Common myeloid progenitor, CD34-positive (primary cell): ENCODE measurements at regions of chr7 and their contacts with region 1.

Region 1: DNA sequence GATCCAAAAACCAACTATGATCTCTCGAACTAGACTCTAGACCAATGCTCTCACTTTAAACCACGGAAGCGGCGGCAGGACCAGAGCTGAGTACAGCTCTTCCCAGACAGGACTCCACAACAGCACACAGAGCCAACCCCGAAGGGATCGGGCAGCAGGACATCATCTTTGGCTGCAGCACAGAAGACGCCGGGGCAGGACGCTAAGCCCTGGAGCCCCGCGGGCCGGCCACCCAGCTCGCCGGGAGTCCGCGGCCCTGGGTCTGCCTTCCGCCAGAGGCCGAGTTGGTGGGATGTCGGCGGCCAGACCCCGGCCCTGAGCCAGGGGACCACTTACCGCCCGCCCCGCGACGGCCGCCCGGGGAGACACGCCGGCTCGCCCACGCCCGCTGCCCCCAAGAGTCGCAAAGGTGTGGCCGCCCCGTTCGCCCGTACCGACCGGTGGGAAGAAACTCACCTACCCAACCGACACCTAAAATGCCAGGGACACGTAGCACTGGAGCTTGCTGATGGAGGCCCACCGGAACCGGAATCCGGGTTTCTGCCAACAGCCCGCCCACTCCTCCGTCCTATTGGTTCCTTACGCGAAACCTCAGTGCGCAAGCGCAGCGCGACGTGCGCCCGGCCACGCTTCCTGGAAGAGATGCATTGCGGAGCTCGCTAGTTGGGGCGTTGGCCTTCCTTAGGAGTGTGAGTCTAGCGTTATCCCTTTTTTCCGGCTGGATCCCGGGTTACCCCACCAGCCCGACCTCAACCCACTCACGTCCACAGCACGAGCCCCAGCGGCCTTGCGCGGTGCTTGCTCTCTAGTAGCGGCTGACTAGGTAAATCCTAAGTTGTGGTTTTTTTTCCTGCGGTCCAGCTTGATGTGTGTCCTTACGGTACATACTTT is at the start of gene SEC61G:
- DNase-seq: peak; percentile 96 to 97 (median 97)
- H3K4me3 ChIP-seq: peak within 1 kb of the TSS; percentile 84 to 99 (median 93)
- H3K27ac ChIP-seq: peak within 1 kb of the TSS; percentile 65 to 89
- H3K4me1 ChIP-seq: peaks cover 13 to 33% (median 16%) of the 10 kb centered on the region in 4 experiments
- H3K27me3 ChIP-seq: peaks cover 0 to 5% (median 0%) of the 10 kb centered on the region in 5 experiments

Region 2: DNA sequence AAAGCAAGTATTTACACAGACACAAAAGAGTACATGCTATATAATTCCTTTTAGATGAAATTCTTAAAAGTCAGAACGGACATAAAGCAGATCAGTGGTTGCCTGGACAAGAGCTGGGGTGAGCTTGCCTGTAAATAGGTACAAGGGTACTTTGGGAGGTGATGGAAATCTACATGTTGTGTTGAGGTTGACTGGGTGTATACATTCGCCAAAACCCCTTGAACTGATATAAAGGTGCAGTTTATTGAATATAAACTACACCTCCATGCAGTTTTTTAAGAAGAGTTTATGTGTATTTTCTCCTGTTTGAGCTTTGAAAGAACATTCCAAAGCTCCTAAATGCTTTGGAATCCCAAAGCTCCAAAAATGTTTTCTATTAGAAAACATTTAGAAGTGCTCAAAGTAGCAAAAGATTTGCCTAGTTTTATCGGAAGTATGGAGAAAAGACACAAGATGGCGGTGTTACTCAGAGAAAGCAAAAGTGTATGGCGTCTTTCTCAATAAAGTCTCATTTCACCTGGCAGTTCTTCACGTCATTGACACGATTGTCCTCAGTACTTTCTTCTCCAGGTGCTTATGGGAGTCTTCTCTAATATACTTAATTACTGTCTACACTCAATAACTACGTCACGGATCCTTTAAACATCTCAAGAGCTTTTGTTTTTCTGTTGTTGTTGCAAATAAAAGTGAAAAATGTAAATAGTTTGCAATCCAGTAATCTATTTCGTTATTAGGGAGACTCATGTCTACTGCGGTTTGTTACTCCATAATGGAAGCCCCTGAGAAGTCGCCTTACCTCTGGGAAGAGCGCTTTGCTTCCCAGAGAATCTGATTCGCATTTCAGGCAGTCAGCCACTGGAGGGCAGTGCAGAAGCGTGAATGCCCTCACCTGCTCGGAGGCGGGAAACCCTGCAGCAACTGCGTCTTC is 14.8 kb after region 1 on chr7:
- CTCF ChIA-PET with region 1: interaction called, 16 read pairs
- POLR2A ChIA-PET with region 1: no interaction called
- DNase-seq: peak; percentile 63 to 74 (median 72)
- H3K4me3 ChIP-seq: peak overlapping the region in 6 of 7 experiments; percentile 44 to 82 (median 58)
- H3K27ac ChIP-seq: no peak overlapping the region
- H3K4me1 ChIP-seq: peaks cover 0 to 5% (median 2%) of the 10 kb centered on the region in 4 experiments
- H3K27me3 ChIP-seq: peaks cover 3 to 18% (median 6%) of the 10 kb centered on the region in 5 experiments